Ascending aorta (tissue), 2 donors: ENCODE measurements at regions of chr10 and their contacts with region 1.

Region 1: DNA sequence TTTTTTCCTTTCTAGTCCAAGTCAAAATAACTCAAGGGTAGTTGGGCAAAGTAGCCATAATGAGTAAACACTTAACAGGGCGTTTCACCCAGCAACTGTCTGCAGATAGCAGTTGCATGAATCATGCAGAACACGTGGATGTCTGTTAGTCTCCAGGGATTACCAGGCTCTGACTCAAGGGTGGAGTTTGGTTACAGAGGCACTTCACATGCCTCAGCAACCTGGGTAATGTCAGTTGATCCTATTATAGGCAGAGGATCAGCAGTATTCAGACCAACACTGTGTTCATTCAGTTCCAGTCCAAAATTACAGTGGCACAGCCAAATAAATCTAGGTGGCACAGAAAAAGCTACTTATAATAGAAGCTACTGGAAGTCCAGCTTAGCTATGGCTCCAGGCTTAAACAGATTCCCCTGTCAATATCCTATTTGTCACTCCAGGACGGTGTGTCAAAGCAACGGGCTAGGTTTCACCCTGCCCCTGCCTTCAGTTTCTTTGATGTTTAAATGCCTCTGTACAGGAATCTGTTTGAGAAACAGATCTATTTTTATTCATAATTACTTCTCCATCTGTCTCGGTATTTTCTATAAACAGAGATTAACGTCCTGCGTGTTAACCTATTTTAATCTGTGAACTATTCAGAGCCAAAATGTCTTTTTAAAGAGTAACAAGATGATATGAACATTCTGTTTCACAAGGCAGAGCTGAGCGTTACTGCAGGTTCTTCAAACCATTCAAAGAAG is 162.7 kb upstream of the AKR1E2 start:
- DNase-seq: peak; percentile 43 to 93
- H3K4me3 ChIP-seq: peak overlapping the region in 1 of 2 donors; percentile 31
- H3K27ac ChIP-seq: peak overlapping the region; percentile 82 to 94
- H3K4me1 ChIP-seq: peaks cover 11 to 28% of the 10 kb centered on the region in 2 donors
- H3K27me3 ChIP-seq: no peaks in the 10 kb centered on the region
- CTCF ChIP-seq: no peak

Region 2: DNA sequence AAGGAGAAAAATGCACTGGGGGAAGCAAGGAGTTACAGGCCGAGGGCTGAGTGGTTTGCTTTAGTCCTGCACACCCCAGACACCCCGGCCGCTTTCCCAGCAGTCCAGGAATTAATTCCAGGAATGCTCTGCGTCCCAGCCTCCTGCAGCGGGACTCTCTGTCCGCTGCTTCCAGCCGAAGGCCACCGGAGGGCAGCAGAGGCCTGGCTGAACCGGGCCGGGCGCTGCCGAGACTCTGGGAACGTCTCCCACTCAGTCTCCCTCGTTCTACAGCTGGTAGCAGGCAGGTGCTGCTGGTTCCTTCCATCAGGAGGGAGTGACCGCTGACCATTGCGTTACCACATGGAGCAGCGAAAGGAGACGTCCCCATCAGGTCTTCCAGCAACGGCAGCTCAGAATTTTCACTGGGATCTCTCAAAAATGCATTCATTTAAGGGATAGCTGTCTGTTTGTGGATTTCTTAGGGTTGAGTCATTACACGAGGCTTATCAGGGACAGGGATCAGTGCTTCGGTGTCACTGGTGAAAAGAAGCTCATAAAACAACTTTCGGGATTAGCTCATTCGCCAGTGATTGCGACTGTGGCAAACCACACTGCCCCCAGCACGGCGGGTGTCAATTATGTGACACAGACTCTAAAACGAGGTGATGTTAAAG is 1465.9 kb before region 1 on chr10:
- intact Hi-C with region 1: loop called (anchors 10 kb)
- DNase-seq: peak; percentile 26 to 90
- H3K4me3 ChIP-seq: peak overlapping the region in 1 of 2 donors; percentile 54
- H3K27ac ChIP-seq: no peak overlapping the region
- H3K4me1 ChIP-seq: peaks cover 3 to 4% of the 10 kb centered on the region in 2 donors
- H3K27me3 ChIP-seq: no peaks in the 10 kb centered on the region
- CTCF ChIP-seq: peak; percentile 95 to 96 (median 96)

Region 3: DNA sequence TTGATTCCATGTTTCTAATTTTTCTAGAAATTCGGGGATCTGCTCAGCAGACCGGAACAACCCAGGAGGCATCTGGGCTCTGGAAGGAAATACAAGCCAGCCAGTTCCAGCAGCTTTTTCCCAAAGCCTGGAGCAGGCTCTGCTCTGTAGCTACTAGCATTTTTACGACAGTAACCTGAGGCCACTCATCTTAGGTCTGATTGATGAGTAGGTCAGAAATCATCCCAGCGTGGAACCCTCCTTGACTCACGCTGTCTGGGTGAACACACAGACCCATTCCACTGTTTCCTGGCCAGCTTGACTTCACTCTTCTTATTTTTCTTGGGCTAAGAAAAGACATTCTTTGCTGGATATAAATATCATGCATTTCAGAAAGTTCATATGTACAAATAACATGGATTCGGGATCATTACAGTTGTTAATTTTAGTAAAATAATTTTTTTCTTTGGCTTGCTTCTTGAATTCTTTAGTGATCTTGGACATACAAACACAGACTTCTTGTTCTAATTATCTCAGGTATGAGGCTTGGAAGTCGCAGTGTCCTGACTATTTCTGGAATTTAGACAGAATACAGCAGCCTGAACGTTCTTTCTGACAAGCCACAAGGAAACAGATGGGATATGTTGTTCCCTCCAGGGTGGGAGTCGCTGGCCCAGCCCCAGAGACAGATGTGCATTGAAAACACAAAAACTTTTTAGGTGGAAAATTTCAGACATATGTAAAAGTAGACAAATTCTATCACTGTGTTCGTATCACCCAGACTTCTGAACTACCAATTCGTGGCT is 1436.2 kb before region 1 on chr10:
- intact Hi-C with region 1: loop called (anchors 5 kb)
- DNase-seq: no peak
- H3K4me3 ChIP-seq: peak overlapping the region in 1 of 2 donors; percentile 7
- H3K27ac ChIP-seq: peak overlapping the region; percentile 44 to 60
- H3K4me1 ChIP-seq: peaks cover 0 to 21% of the 10 kb centered on the region in 2 donors
- H3K27me3 ChIP-seq: no peaks in the 10 kb centered on the region
- CTCF ChIP-seq: no peak

Region 4: DNA sequence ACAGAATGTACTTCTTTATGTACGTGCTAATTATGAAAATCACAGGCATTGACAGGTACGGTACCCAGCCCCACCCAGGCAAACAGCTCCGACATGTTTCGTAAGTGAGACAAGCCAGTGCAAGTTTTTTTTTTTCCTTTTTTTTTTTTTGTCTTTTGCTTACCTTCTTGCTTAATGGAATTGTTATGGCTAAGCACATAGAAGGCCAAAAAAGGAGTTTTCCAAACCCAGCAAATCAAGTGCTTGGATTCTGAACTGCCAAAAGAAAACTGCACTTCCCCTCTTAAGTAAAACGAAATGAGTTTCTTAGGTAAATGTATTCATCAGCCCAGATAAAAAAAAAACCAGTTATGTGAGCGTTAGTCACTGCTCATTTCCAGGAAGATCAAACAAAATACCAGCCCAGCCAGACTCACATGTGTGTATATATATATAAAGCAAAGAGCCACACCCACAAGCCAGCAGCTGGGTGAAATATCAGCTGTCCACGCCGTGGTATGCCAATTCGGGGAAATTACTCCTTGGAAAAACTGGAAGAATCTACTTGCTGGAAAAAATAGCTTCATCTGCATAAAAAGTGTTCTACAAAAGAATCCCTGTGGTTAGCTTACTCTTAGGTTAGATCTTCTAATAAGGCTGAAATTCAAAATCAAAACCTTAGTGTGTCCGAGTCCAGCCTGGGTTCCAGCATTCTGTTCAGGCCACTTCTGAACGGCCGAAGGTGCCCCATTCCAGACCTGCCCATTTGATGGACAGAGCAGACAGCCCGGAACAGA is 886.3 kb before region 1 on chr10:
- intact Hi-C with region 1: loop called (anchors 5 kb)
- DNase-seq: peak; percentile 53 to 92
- H3K4me3 ChIP-seq: peak overlapping the region; percentile 79 to 99
- H3K27ac ChIP-seq: peak overlapping the region; percentile 92 to 97
- H3K4me1 ChIP-seq: peaks cover 21 to 45% of the 10 kb centered on the region in 2 donors
- H3K27me3 ChIP-seq: no peaks in the 10 kb centered on the region
- CTCF ChIP-seq: no peak

Region 5: DNA sequence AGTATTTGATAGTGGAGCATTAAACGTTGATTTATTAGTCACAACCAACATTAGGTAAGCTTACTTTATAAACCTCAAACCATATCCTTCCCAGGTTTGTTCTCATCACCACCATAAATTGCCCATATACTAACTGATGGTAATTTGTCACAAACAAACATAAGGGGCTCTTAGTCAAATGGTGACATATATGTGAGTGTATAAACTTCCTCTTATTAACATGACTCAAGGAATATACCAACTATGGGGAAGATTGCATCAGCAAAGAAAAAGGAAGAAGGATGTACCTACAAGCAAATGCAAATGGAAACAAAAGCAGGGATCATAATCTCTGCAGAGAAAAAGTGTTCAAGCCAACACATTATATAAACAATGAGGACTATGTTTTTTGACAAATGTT is 255.6 kb before region 1 on chr10:
- intact Hi-C with region 1: no loop called
- DNase-seq: no peak
- H3K4me3 ChIP-seq: no peak overlapping the region
- H3K27ac ChIP-seq: no peak overlapping the region
- H3K4me1 ChIP-seq: peaks cover 0 to 16% of the 10 kb centered on the region in 2 donors
- H3K27me3 ChIP-seq: no peaks in the 10 kb centered on the region
- CTCF ChIP-seq: no peak

Region 6: GRCh38 chr10:4532467-4532866 is 130.9 kb before region 1 on chr10:
- intact Hi-C with region 1: loop called (anchors 2 kb)
- DNase-seq: no peak
- H3K4me3 ChIP-seq: no peak overlapping the region
- H3K27ac ChIP-seq: peak overlapping the region; percentile 22 to 42
- H3K4me1 ChIP-seq: peaks cover 0 to 4% of the 10 kb centered on the region in 2 donors
- H3K27me3 ChIP-seq: no peaks in the 10 kb centered on the region
- CTCF ChIP-seq: no peak